IMR-90 (cell line): ENCODE measurements at regions of chr2 and their contacts with region 1.

Region 1: GRCh38 chr2:27663463-27664249 is at the starts of genes SLC4A1AP and SUPT7L:
- DNase-seq: peak; percentile 89
- ATAC-seq: peak; percentile 90
- H3K4me3 ChIP-seq: peak within 1 kb of the TSS; percentile 85
- H3K27ac ChIP-seq: peak within 1 kb of the TSS; percentile 86
- H3K4me1 ChIP-seq: peaks cover 5% of the 10 kb centered on the region
- H3K27me3 ChIP-seq: no peaks in the 10 kb centered on the region
- CTCF ChIP-seq: no peak
- POLR2A ChIP-seq: peak; percentile 58; the same call in 1 of the 2 replicates
- RAD21 ChIP-seq: no peak
- total RNA-seq, gene SLC4A1AP: 11.7 and 17.8 TPM in 2 replicates
- total RNA-seq, gene SUPT7L: 16.7 and 23.1 TPM in 2 replicates

Region 2: DNA sequence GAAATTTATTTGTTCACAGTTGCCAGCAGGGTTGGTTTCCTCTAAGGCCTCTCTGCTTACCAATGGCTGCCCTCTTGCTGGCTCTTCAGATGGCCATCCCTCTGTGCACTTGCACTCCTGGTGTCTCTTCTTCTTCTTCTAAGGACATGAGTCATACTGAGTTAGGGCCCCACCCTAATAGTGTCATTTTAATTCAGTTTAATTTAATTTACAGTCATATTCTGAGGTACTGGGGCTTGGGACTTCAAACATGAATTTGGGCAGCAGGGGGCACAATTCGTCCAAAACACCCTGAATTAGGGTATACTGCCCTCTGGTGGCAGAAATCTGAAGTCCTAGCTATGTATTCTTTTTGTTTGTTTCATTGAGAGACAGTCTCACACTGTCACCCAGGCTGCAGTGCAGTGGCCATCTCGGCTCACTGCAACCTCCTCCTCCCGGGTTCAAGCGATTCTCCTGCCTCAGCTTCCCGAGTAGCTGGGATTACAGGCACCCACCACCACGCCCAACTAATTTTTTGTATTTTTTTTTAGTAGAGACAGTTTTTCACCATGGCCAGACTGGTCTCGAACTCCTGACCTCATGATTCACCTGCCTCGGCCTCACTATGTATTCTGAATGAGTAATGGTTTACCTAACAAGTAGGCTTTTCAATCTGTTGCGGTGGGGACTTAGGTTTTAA is 19.9 kb after region 1 on chr2:
- CTCF ChIA-PET with region 1: interaction called, 3 read pairs
- POLR2A ChIA-PET with region 1: interaction called, 12 read pairs
- dilution Hi-C with region 1: no loop called
- in situ Hi-C with region 1: no loop called
- intact Hi-C with region 1: no loop called
- DNase-seq: peak; percentile 90
- ATAC-seq: peak; percentile 69
- H3K4me3 ChIP-seq: no peak overlapping the region
- H3K27ac ChIP-seq: peak overlapping the region; percentile 52; the same call in 1 of the 2 replicates
- H3K4me1 ChIP-seq: peaks cover 10% of the 10 kb centered on the region
- H3K27me3 ChIP-seq: no peaks in the 10 kb centered on the region
- CTCF ChIP-seq: peak; percentile 99
- POLR2A ChIP-seq: no peak
- RAD21 ChIP-seq: peak; percentile 75

Region 3: DNA sequence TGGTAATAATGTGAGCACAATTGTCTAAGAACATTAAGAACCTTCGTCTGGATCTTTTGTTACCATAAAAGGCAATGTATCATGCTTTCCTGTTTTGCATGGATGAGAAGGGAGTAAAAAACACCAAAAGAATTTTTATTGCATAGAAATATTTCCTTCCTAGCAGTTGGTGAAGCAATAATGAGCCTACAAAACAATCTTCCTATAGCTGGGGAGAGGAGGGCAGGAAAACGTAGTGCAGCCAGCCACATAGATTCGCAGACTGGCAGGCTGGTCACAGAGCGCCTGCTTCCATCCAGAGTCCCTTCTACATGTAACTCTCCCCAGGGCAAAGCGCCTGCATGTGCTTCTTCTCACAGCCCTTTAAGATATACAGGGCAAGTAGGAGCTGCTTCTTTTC is 417.3 kb after region 1 on chr2:
- CTCF ChIA-PET with region 1: no interaction called
- POLR2A ChIA-PET with region 1: no interaction called
- dilution Hi-C with region 1: no loop called
- in situ Hi-C with region 1: no loop called
- intact Hi-C with region 1: no loop called
- DNase-seq: peak; percentile 52
- ATAC-seq: peak; percentile 84
- H3K4me3 ChIP-seq: no peak overlapping the region
- H3K27ac ChIP-seq: peak overlapping the region; percentile 79
- H3K4me1 ChIP-seq: peaks cover 10% of the 10 kb centered on the region
- H3K27me3 ChIP-seq: no peaks in the 10 kb centered on the region
- CTCF ChIP-seq: no peak
- POLR2A ChIP-seq: no peak
- RAD21 ChIP-seq: no peak